Astrocyte of the cerebellum (primary cell): ENCODE measurements at regions of chr22 and their contacts with region 1.

Region 1: DNA sequence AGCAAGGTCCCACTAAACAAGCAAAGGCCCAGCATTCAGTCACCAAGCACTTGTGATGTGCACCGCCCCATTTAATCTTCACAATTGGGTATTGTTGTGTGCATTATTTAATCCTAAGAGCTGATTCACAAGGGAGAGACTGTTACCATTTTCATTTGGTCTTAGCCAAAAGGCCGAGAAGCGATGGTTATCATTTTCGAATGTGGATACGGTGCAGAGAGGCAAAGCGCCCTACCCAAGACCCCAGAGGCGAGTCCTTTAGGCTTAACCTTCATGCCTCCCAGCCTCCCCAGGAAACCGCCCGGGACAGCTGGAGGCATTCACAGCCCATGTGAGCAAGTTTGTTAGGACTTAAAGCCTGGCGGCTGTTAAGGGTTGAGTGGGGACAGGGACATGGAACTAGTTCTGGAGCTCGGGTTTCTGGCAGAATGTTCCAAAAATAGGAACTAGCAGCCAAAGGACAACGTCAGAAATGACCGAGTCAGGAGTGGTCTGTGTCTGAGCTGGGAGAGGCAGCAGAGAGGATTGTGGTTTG is 13.0 kb upstream of the UPK3A start:
- DNase-seq: no peak
- H3K4me3 ChIP-seq: no peak overlapping the region
- CTCF ChIP-seq: no peak

Region 2: DNA sequence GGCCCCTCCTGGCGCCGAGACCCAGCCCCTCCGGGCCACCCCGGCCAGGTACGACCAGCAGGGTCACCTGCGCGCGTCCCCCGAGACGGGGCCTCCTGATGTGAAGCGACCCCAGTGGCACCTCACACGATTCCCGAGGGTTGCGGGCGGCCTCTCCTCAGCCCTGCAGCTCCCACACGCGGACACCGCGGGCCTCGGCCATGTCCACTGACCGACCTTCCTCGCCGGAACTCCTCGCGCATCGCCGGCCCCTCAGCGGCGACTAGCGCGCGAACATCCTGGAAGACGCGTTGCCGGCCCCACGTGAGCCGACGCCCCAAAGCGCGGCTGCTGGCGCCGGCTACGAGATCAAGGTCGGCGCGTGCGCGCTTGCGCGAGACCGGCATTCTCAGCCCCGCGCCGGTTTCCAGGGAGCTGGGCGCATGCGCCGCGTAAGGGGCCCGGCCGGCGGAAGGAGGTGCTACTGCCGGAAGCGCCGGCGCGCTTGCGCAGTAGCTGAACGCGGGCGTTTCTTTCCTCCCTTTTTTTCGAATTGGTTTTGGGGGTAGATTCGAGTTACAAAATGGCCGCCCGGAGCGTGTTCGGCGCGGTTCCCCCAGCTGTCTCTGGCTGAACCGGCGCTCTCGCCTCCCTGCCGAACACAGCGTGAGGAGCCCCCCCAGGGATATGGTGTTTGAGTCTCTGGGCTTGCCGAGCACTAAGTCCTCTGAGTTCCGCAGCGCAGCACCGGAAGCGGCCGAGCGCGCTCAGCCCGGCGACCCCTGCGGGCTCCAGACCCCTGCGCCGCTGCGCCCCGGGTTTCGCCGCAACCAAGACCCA is 108.1 kb before region 1 on chr22 and contains the start of gene NUP50:
- in situ Hi-C with region 1: no loop called
- DNase-seq: peak; percentile 88
- H3K4me3 ChIP-seq: peak within 1 kb of the TSS; percentile 55
- CTCF ChIP-seq: no peak

Region 3: GRCh38 chr22:45334528-45335419 is 63.0 kb after region 1 on chr22:
- in situ Hi-C with region 1: loop called (anchors 5 kb)
- DNase-seq: no peak
- H3K4me3 ChIP-seq: no peak overlapping the region
- CTCF ChIP-seq: peak; percentile 18

Region 4: GRCh38 chr22:45425101-45425500 is 153.4 kb after region 1 on chr22:
- in situ Hi-C with region 1: loop called (anchors 5 kb)
- DNase-seq: no peak
- H3K4me3 ChIP-seq: no peak overlapping the region
- CTCF ChIP-seq: no peak

Region 5: GRCh38 chr22:45526768-45527360 is 255.1 kb after region 1 on chr22:
- in situ Hi-C with region 1: loop called (anchors 5 kb)
- DNase-seq: no peak
- H3K4me3 ChIP-seq: no peak overlapping the region
- CTCF ChIP-seq: no peak

Region 6: DNA sequence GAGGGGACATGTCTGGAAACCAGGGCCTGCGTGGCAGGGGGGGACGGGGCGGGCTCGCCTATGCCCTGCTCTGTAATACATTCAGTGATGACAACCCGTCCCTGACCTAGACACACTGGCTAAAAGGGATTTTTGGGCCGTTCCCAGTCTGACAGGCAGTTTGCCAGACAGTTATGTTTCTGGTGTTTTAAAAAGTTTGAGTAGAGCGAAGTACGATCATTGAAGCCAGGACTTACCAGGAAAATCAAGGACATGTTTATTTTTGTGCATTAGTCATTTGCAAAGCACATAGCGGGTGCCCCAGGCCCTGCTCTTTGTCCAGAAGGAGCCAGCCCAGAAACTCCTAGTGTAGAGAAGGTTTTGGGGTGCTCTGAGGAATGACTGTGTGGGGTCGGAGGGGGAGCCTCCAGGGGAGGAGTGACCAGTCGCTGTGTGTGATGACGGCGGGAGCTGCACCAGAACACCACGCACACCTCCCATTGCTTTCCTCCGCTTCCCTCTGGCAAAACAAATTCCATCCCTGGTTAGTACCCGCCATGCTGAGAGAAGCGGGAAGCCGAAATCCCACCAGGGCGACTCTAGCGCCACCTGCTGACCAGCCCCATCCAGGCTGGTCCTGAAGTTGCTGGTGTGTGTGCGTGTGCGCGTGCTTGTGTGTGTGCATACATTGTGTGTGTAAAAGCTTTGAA is 281.8 kb after region 1 on chr22:
- in situ Hi-C with region 1: loop called (anchors 5 kb)
- DNase-seq: peak; percentile 76
- H3K4me3 ChIP-seq: no peak overlapping the region
- CTCF ChIP-seq: peak; percentile 99